PC-9 (cell line): ENCODE measurements at regions of chrX and their contacts with region 1.

Region 1: DNA sequence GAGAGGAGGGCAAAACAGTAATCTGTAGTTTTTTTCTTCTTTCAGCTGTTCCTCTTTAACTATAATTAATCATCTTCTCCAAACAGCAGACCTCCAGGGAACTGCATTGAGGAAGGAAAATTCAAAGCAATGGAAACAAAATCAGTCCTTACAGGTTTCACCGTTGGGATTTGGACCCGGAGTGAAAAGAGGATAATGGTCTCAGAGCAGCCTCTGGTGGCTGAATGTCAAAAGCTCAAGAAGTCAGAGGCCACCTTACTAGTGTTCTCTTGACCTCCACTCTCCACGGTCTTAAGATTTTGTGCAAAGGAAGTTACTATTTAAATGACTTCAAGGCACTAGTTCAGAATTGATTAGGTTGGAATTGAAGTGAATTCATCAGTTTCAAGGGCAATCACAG is 16.0 kb upstream of the MID1 start:
- DNase-seq: peak; percentile 36 to 47
- H3K4me3 ChIP-seq: no peak overlapping the region
- H3K27ac ChIP-seq: peak overlapping the region; percentile 84; the same call in 1 of the 2 replicates
- H3K4me1 ChIP-seq: peaks cover 47% of the 10 kb centered on the region
- H3K27me3 ChIP-seq: no peaks in the 10 kb centered on the region
- CTCF ChIP-seq: peak; percentile 70

Region 2: DNA sequence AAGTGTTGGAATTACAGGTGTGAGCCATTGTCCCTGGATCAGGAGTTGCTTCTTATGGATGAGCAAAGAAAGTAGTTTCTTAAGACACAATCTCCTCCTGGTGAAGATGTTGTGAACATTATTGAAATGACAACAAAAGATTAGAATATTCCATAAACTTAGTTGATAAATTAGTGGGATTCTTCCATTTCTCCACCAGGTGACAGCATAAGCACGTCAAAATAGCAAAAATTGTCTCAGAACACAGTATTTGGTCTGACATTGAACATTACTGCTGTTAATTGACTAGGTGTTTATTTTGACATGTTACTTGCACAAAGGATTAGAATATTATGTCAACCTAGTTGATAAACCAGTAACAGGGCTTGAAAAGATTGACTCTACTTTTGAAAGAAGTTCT is 647.6 kb before region 1 on chrX:
- CTCF ChIA-PET with region 1: no interaction called
- POLR2A ChIA-PET with region 1: no interaction called
- intact Hi-C with region 1: loop called (anchors 10 kb)
- DNase-seq: no peak
- H3K4me3 ChIP-seq: no peak overlapping the region
- H3K27ac ChIP-seq: no peak overlapping the region
- H3K4me1 ChIP-seq: no peaks in the 10 kb centered on the region
- H3K27me3 ChIP-seq: no peaks in the 10 kb centered on the region
- CTCF ChIP-seq: peak; percentile 70

Region 3: GRCh38 chrX:10254741-10255140 is 381.6 kb before region 1 on chrX:
- CTCF ChIA-PET with region 1: no interaction called
- POLR2A ChIA-PET with region 1: no interaction called
- intact Hi-C with region 1: loop called (anchors 1 kb)
- DNase-seq: peak; percentile 20 to 57
- H3K4me3 ChIP-seq: no peak overlapping the region
- H3K27ac ChIP-seq: no peak overlapping the region
- H3K4me1 ChIP-seq: no peaks in the 10 kb centered on the region
- H3K27me3 ChIP-seq: no peaks in the 10 kb centered on the region
- CTCF ChIP-seq: peak; percentile 56

Region 4: GRCh38 chrX:10447577-10448214 is 188.6 kb before region 1 on chrX:
- CTCF ChIA-PET with region 1: interaction called, 4 read pairs
- POLR2A ChIA-PET with region 1: no interaction called
- intact Hi-C with region 1: loop called (anchors 10 kb)
- DNase-seq: peak; percentile 44 to 78
- H3K4me3 ChIP-seq: no peak overlapping the region
- H3K27ac ChIP-seq: no peak overlapping the region
- H3K4me1 ChIP-seq: peaks cover 9% of the 10 kb centered on the region; the same call in 1 of the 2 replicates
- H3K27me3 ChIP-seq: no peaks in the 10 kb centered on the region
- CTCF ChIP-seq: no peak

Region 5: GRCh38 chrX:10496345-10496965 is 139.9 kb before region 1 on chrX:
- CTCF ChIA-PET with region 1: no interaction called
- POLR2A ChIA-PET with region 1: no interaction called
- intact Hi-C with region 1: no loop called
- DNase-seq: no peak
- H3K4me3 ChIP-seq: no peak overlapping the region
- H3K27ac ChIP-seq: no peak overlapping the region
- H3K4me1 ChIP-seq: no peaks in the 10 kb centered on the region
- H3K27me3 ChIP-seq: no peaks in the 10 kb centered on the region
- CTCF ChIP-seq: no peak

Region 6: DNA sequence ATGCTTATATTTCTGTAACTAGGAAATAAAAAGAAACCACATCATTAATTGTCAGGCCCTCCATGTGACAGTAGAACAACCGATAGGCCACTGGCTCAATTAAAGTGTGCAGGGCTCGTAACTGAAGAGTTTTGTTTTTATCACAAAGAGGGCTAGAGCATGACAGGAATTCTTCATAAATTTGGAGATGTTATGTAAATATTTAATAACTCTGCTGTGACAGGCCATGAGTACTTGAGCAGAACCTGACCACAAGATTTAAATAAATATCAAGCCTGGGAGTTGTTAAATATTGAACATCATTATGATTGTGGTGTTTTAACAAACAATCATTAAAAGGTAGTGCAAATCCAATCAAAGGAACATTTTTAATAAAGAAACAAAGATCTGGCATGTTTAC is 71.8 kb before region 1 on chrX:
- CTCF ChIA-PET with region 1: no interaction called
- POLR2A ChIA-PET with region 1: no interaction called
- intact Hi-C with region 1: no loop called
- DNase-seq: no peak
- H3K4me3 ChIP-seq: no peak overlapping the region
- H3K27ac ChIP-seq: no peak overlapping the region
- H3K4me1 ChIP-seq: no peaks in the 10 kb centered on the region
- H3K27me3 ChIP-seq: no peaks in the 10 kb centered on the region
- CTCF ChIP-seq: no peak

Region 7: GRCh38 chrX:10579112-10580011 is 57.0 kb before region 1 on chrX:
- CTCF ChIA-PET with region 1: no interaction called
- POLR2A ChIA-PET with region 1: no interaction called
- intact Hi-C with region 1: loop called (anchors 2 kb)
- DNase-seq: peak; percentile 20 to 88
- H3K4me3 ChIP-seq: peak overlapping the region; percentile 52
- H3K27ac ChIP-seq: peak overlapping the region; percentile 99
- H3K4me1 ChIP-seq: peaks cover 33% of the 10 kb centered on the region
- H3K27me3 ChIP-seq: no peaks in the 10 kb centered on the region
- CTCF ChIP-seq: no peak

Region 8: GRCh38 chrX:10591363-10592335 is 44.7 kb before region 1 on chrX:
- CTCF ChIA-PET with region 1: no interaction called
- POLR2A ChIA-PET with region 1: no interaction called
- intact Hi-C with region 1: no loop called
- DNase-seq: no peak
- H3K4me3 ChIP-seq: no peak overlapping the region
- H3K27ac ChIP-seq: no peak overlapping the region
- H3K4me1 ChIP-seq: no peaks in the 10 kb centered on the region
- H3K27me3 ChIP-seq: no peaks in the 10 kb centered on the region
- CTCF ChIP-seq: no peak

Region 9: GRCh38 chrX:10722851-10723250 is 86.5 kb after region 1 on chrX:
- CTCF ChIA-PET with region 1: no interaction called
- POLR2A ChIA-PET with region 1: no interaction called
- intact Hi-C with region 1: loop called (anchors 2 kb)
- DNase-seq: peak in 1 of 2 experiments; percentile 37
- H3K4me3 ChIP-seq: no peak overlapping the region
- H3K27ac ChIP-seq: no peak overlapping the region
- H3K4me1 ChIP-seq: no peaks in the 10 kb centered on the region
- H3K27me3 ChIP-seq: no peaks in the 10 kb centered on the region
- CTCF ChIP-seq: peak; percentile 82

Region 10: DNA sequence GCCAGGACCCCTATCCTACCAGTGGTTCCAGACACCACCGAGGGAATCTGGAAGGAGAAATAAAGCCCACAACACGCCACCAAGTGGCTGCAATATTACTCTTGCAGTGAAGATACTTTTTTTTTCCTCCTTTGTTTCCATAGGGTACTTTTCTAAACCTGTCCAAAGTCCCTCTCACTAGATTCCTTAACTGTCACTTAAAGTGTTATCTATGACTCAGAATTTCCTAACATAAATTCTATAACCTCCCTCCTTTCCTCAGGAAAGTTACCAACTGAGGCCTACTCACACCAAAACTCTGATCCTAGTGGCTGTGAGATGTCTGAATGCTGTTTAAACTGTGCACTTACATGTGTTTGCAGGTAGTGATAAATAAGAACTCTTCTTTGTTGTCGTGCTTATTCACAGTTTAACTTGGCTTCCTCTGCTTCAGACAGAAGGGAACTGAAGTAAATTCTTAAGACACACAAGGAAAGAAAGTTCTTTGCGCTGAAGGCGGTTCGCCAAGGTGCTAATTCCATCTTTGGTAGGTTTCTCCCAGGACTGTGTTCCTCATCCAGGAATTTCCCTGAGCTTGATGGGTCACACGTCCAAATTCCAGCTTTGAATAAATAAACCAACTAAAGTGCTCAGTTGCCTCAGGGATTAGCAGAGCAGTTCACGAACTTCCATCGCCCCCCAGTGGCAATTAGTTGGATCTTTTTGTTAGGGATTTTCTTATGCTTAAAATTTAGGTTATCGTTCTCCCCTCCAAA is 464.1 kb after region 1 on chrX:
- CTCF ChIA-PET with region 1: no interaction called
- POLR2A ChIA-PET with region 1: no interaction called
- intact Hi-C with region 1: loop called (anchors 1 kb)
- DNase-seq: peak in 1 of 2 experiments; percentile 24
- H3K4me3 ChIP-seq: no peak overlapping the region
- H3K27ac ChIP-seq: no peak overlapping the region
- H3K4me1 ChIP-seq: no peaks in the 10 kb centered on the region
- H3K27me3 ChIP-seq: no peaks in the 10 kb centered on the region
- CTCF ChIP-seq: peak; percentile 70